ENCODE measurements at regions of chr11 and their contacts with region 1.

Region 1: DNA sequence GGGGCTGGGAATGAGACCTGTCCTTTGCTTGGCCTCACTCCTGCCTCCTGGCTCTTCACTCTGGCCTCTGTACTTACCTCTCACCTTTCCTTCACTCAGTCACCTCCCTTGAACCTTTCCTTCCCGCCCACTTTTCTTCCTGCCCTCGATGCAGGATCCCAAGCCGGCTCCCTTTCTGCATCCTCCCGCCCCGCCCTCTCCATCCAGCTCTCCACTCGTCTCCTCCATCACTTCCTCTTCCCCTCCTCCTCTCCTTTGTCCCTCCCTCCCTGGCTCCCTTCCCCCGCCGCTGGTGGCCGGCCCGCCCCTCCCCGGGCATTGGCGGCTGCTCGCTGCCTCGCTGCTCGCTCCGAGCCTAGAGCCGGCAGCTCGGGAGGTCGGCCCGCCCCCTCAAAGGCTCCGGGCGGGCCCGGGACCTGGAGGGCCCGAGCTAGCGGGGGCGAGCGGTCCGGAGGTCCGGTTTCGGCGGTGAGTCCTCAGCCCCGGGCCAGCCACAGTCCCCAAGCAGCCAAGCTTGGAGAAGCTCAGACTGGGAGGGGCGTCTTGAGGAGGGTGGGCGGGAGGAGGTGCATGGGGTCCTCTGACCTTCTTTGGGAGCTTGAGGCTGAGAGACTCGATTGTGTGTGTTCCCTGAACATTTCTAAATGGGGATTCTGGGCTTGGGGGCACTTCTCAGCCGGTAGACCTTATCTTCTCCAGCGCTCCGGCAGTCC is 13.8 kb downstream of the PHLDB1 start:
- DNase-seq: peak; percentile 92 to 94 (median 93)
- ATAC-seq: peak; percentile 45 to 75 (median 66)
- H3K4me3 ChIP-seq: peak overlapping the region; percentile 36 to 76 (median 60)
- H3K27ac ChIP-seq: peak overlapping the region; percentile 80 to 99 (median 91)
- H3K4me1 ChIP-seq: peaks cover 11 to 94% (median 79%) of the 10 kb centered on the region in 12 donors
- H3K27me3 ChIP-seq: no peaks in the 10 kb centered on the region
- CTCF ChIP-seq: no peak
- POLR2A ChIP-seq: peak in 1 of 2 donors; percentile 64

Region 2: GRCh38 chr11:118572061-118572980 is 48.9 kb before region 1 on chr11 and contains the start of gene ARCN1:
- intact Hi-C with region 1: loop called in 1 of 10 experiments (anchors 5 kb)
- DNase-seq: peak; percentile 83 to 90 (median 86)
- ATAC-seq: peak; percentile 80 to 91 (median 86)
- H3K4me3 ChIP-seq: peak within 1 kb of the TSS; percentile 55 to 100 (median 93)
- H3K27ac ChIP-seq: peak within 1 kb of the TSS; percentile 90 to 99 (median 98)
- H3K4me1 ChIP-seq: peaks cover 0 to 50% (median 37%) of the 10 kb centered on the region in 12 donors
- H3K27me3 ChIP-seq: no peaks in the 10 kb centered on the region
- CTCF ChIP-seq: peak in 1 of 12 donors; percentile 6
- POLR2A ChIP-seq: peak in 1 of 2 donors; percentile 58
- total RNA-seq, gene ARCN1: 87.6 to 127 (median 99.6) TPM

Region 3: GRCh38 chr11:118659314-118659952 is 38.2 kb after region 1 on chr11:
- intact Hi-C with region 1: loop called in 3 of 10 experiments (anchors 5 kb)
- DNase-seq: peak; percentile 91 to 94 (median 93)
- ATAC-seq: peak; percentile 73 to 84 (median 78)
- H3K4me3 ChIP-seq: peak overlapping the region in 1 of 12 donors; percentile 7
- H3K27ac ChIP-seq: peak overlapping the region in 11 of 12 donors; percentile 1 to 70 (median 40)
- H3K4me1 ChIP-seq: peaks cover 0 to 26% (median 14%) of the 10 kb centered on the region in 12 donors
- H3K27me3 ChIP-seq: no peaks in the 10 kb centered on the region
- CTCF ChIP-seq: peak; percentile 95 to 100 (median 98)
- POLR2A ChIP-seq: no peak